ENCODE measurements at regions of chr17 and their contacts with region 1.

Region 1: DNA sequence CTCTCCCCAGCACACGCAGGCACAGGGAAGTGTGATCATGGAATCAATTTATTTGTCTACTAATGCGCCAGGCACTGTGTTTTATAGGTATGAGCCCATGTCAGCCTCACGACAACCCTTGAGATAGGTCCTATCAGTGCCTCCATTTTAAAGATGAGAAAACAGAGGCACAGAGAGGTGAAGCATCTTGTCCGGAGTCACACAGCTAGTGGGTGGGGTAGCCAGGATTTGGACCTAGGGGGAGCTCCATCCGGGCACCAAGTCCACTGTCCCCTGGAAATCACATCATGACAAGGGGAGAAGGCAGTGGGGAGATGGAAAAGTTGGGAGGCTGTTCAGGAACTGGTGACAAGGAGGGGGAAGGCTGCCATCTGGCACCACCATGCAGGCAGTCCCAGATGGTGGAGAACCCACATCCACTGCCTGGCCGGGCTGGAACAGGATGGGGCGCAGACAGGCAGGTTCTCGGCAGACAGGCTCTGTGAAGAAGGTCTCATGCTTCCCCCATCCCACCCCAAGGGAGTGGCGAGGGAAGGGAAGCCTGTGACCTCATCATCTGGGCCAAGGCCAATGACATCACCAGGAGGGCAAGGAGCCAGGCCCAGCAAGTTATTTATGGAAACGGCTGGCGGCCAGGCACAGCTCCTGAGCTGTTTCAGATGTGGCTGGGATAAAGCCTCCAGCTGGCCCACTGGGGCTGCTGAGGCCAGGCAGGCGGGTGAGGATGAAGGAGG is 126.0 kb upstream of the SDK2 start:
- DNase-seq: peak; percentile 90

Region 2: DNA sequence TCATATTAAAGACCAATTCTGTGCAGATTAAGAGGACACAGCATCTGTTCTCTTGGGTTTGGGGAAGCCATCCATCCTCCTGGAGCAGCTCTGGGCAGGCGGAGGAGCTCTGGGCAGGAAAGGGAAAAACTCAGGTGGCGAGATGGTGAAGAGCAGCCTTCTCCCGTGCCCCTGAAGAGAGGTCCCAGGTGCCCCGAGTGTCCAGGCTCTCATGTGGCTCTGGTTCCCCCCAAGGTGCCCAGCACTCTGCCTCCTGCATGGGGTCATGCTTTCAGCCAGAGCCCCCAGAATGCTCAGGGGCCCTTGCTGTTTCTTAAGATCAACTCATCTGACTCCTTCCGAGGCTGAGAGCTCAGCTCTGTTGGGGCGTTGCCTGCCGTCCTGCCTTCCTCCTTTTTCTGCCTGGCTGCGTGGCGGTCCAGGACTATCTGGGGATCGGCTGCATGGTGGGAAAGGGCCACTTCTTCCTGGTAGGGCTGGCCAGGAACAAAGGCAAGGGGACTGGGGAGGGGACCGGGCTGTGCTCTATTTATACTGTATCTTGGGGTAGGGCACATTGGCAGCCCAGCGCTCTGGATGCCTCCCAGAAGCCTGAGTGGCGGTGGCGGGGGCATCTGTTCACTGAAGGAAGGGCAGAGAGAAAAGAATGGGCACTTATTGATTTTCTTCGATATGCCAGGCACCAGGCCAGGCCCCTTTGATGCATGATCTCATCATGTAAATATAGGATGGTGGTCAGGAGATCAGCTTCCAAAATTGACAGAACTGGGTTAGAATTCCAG is 22.9 kb before region 1 on chr17:
- intact Hi-C with region 1: loop called (anchors 1 kb)
- DNase-seq: no peak